B cell (primary cell): ENCODE measurements at regions of chr20 and their contacts with region 1.

Region 1: GRCh38 chr20:19784511-19785172 is 26.6 kb downstream of the RIN2 start:
- DNase-seq: peak; percentile 75
- ATAC-seq: peak; percentile 78
- H3K4me3 ChIP-seq: no peak overlapping the region
- H3K4me3 Mint-ChIP-seq: peak overlapping the region; percentile 13
- H3K27ac ChIP-seq: no peak overlapping the region
- H3K27ac Mint-ChIP-seq: no peak overlapping the region
- H3K4me1 ChIP-seq: peaks cover 7 to 11% of the 10 kb centered on the region in 2 donors
- H3K4me1 Mint-ChIP-seq: peaks cover 20% of the 10 kb centered on the region
- H3K27me3 ChIP-seq: no peaks in the 10 kb centered on the region
- H3K27me3 Mint-ChIP-seq: peaks cover 8% of the 10 kb centered on the region
- CTCF ChIP-seq: peak; percentile 70

Region 2: DNA sequence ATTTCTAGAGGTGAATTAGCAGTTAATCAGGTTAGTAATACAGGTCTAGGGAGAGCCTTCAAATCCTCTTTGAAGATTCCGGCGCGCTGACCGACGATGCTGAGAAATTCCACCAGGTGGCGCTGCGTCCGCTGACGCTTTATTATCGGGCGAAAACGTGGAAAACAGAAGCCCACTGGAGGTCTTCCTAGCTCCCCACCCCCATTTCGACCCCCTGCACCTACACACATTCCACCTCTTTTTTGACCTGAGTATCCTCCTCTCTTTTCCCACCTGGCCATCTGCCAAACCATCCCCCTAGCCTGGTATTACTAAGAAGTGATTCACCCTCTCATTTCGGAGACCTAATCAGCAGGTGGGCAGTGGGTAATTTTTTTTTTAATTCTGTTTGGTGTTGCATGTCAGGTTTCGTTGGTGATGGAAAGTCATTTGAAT is 91.9 kb before region 1 on chr20:
- CTCF ChIA-PET with region 1: interaction called, 13 read pairs
- POLR2A ChIA-PET with region 1: no interaction called
- intact Hi-C with region 1: loop called (anchors 1 kb)
- DNase-seq: peak; percentile 73
- ATAC-seq: peak; percentile 51
- H3K4me3 ChIP-seq: peak overlapping the region in 1 of 5 experiments; percentile 16
- H3K4me3 Mint-ChIP-seq: peak overlapping the region; percentile 60
- H3K27ac ChIP-seq: no peak overlapping the region
- H3K27ac Mint-ChIP-seq: no peak overlapping the region
- H3K4me1 ChIP-seq: peaks cover 5 to 9% of the 10 kb centered on the region in 2 donors
- H3K4me1 Mint-ChIP-seq: peaks cover 6% of the 10 kb centered on the region
- H3K27me3 ChIP-seq: peaks cover 0 to 2% (median 0%) of the 10 kb centered on the region in 4 experiments
- H3K27me3 Mint-ChIP-seq: peaks cover 4% of the 10 kb centered on the region
- CTCF ChIP-seq: peak; percentile 98

Region 3: GRCh38 chr20:19735446-19735845 is 49.2 kb before region 1 on chr20:
- CTCF ChIA-PET with region 1: no interaction called
- POLR2A ChIA-PET with region 1: no interaction called
- intact Hi-C with region 1: no loop called
- DNase-seq: no peak
- ATAC-seq: peak; percentile 78
- H3K4me3 ChIP-seq: no peak overlapping the region
- H3K4me3 Mint-ChIP-seq: no peak overlapping the region
- H3K27ac ChIP-seq: no peak overlapping the region
- H3K27ac Mint-ChIP-seq: no peak overlapping the region
- H3K4me1 ChIP-seq: peaks cover 4 to 5% of the 10 kb centered on the region in 2 donors
- H3K4me1 Mint-ChIP-seq: peaks cover 10% of the 10 kb centered on the region
- H3K27me3 ChIP-seq: no peaks in the 10 kb centered on the region
- H3K27me3 Mint-ChIP-seq: peaks cover 7% of the 10 kb centered on the region
- CTCF ChIP-seq: no peak

Region 4: DNA sequence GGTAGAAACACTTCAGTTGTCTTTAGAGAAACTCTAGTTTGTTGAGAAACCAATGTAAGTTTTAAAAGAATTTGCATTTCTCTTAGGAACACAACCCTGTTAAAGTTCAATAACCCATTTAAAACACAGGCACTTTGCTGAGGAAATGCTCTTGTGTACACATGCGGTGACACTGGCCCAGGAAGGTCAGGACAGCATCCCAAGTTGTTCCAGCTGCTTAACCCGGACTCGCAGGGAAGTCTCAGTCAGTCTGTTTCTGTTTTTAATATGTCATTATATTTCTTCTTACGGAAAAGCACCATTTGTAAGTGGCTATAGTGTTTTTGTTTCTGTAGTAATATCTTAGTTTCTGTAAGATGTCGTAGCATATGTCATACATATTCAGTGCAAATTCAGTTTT is 10.3 kb after region 1 on chr20:
- CTCF ChIA-PET with region 1: interaction called, 10 read pairs
- POLR2A ChIA-PET with region 1: no interaction called
- intact Hi-C with region 1: no loop called
- DNase-seq: no peak
- ATAC-seq: no peak
- H3K4me3 ChIP-seq: no peak overlapping the region
- H3K4me3 Mint-ChIP-seq: no peak overlapping the region
- H3K27ac ChIP-seq: no peak overlapping the region
- H3K27ac Mint-ChIP-seq: no peak overlapping the region
- H3K4me1 ChIP-seq: no peaks in the 10 kb centered on the region
- H3K4me1 Mint-ChIP-seq: no peaks in the 10 kb centered on the region
- H3K27me3 ChIP-seq: no peaks in the 10 kb centered on the region
- H3K27me3 Mint-ChIP-seq: peaks cover 7% of the 10 kb centered on the region
- CTCF ChIP-seq: no peak

Region 5: DNA sequence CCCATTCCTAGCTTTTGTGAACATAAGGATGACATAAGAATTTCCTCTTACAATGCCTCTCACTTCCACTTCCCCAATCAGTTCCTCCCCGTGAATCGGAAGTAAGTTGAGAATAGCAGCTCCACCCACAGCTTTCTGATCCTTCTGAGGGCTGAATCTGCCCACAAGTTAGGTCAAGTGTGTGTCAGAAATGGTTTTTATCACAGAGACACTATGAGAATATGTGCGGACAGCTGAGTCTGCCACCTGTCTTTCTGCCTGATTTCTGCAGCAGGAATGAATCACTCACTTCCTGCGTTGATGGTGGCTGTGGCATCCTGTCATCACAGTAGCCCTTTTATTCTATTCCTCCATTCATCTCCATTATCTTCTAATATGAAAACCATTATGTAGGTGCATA is 43.6 kb after region 1 on chr20:
- CTCF ChIA-PET with region 1: interaction called, 34 read pairs
- POLR2A ChIA-PET with region 1: no interaction called
- intact Hi-C with region 1: loop called (anchors 1 kb)
- DNase-seq: peak; percentile 84
- ATAC-seq: peak; percentile 91
- H3K4me3 ChIP-seq: no peak overlapping the region
- H3K4me3 Mint-ChIP-seq: peak overlapping the region; percentile 12
- H3K27ac ChIP-seq: peak overlapping the region; percentile 44 to 48
- H3K27ac Mint-ChIP-seq: peak overlapping the region; percentile 66
- H3K4me1 ChIP-seq: peaks cover 58 to 63% of the 10 kb centered on the region in 2 donors
- H3K4me1 Mint-ChIP-seq: peaks cover 62% of the 10 kb centered on the region
- H3K27me3 ChIP-seq: no peaks in the 10 kb centered on the region
- H3K27me3 Mint-ChIP-seq: peaks cover under 1% of the 10 kb centered on the region
- CTCF ChIP-seq: peak; percentile 50

Region 6: DNA sequence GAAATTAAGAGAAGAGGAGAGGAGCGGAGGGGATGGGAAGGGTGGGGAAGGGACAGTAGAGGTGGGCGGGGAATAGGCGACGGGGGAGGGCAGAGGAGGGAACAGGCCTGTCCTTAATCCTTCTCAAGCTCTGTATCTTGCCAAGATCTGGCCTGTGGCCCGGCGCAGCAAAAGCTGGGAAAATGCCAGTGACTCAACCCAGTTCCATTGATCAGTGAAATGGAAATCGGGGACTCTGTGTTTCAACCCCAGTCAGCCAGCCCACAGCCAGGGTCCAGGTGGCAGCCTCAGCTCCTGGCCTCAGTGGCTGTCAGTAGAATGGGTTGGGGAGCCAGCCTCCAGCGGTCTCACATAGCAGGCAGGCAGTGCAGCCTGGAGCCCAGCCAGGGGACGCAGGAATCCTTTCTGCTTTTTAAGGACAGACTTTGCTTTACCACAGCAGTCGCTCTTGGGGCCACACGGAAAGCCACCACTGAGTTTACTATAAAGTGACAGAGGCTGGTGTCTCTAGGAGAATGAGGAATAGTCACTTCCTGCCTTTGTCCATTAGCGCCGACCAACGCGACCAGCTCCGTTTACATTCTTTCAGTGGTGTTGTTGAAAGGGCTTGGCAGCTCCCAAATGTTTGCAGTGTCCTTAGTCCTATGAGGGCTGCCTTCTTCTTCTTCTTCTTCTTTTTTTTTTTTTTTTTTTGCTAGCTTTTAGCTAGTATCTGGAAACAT is 101.5 kb after region 1 on chr20:
- CTCF ChIA-PET with region 1: interaction called, 13 read pairs
- POLR2A ChIA-PET with region 1: interaction called, 5 read pairs
- intact Hi-C with region 1: no loop called
- DNase-seq: no peak
- ATAC-seq: no peak
- H3K4me3 ChIP-seq: no peak overlapping the region
- H3K4me3 Mint-ChIP-seq: no peak overlapping the region
- H3K27ac ChIP-seq: no peak overlapping the region
- H3K27ac Mint-ChIP-seq: no peak overlapping the region
- H3K4me1 ChIP-seq: peaks cover 2 to 5% of the 10 kb centered on the region in 2 donors
- H3K4me1 Mint-ChIP-seq: no peaks in the 10 kb centered on the region
- H3K27me3 ChIP-seq: peaks cover 0 to 24% (median 15%) of the 10 kb centered on the region in 4 experiments
- H3K27me3 Mint-ChIP-seq: peaks cover 32% of the 10 kb centered on the region
- CTCF ChIP-seq: no peak

Region 7: DNA sequence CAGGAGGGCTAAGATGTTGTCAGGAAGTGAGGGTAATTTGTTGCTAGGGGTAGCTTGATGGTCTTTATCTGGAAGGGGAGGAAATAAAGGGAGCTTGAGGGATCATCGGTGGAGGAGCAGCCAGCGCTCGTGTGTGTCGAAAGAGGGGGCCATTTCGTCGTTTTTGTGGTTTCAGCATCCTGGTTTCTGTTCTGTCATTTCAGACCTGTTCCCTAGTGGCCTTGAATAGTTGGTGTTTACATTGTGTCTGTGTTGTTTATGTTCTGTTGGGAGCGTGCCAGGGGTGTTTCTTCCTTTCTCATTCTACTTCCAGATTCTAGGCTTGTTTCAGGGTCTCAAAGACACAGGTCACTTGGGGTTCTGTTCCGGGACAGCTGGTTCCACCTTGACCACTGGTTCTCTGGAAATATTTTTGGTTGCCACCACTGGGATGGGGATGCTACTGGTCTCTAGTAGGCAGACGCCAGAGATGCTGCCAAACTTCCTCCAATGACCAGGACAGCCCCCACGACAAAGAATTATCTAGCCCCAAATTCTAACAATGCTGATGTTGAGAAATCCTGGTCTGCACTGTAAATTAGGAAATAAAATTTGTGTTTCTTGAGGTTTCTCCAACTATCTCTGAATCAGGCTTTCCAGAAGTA is 118.6 kb after region 1 on chr20:
- CTCF ChIA-PET with region 1: interaction called, 9 read pairs
- POLR2A ChIA-PET with region 1: no interaction called
- intact Hi-C with region 1: loop called (anchors 1 kb)
- DNase-seq: peak; percentile 80
- ATAC-seq: peak; percentile 90
- H3K4me3 ChIP-seq: no peak overlapping the region
- H3K4me3 Mint-ChIP-seq: no peak overlapping the region
- H3K27ac ChIP-seq: no peak overlapping the region
- H3K27ac Mint-ChIP-seq: peak overlapping the region; percentile 17
- H3K4me1 ChIP-seq: peaks cover 7 to 10% of the 10 kb centered on the region in 2 donors
- H3K4me1 Mint-ChIP-seq: peaks cover 11% of the 10 kb centered on the region
- H3K27me3 ChIP-seq: no peaks in the 10 kb centered on the region
- H3K27me3 Mint-ChIP-seq: peaks cover 8% of the 10 kb centered on the region
- CTCF ChIP-seq: peak; percentile 48

Region 8: DNA sequence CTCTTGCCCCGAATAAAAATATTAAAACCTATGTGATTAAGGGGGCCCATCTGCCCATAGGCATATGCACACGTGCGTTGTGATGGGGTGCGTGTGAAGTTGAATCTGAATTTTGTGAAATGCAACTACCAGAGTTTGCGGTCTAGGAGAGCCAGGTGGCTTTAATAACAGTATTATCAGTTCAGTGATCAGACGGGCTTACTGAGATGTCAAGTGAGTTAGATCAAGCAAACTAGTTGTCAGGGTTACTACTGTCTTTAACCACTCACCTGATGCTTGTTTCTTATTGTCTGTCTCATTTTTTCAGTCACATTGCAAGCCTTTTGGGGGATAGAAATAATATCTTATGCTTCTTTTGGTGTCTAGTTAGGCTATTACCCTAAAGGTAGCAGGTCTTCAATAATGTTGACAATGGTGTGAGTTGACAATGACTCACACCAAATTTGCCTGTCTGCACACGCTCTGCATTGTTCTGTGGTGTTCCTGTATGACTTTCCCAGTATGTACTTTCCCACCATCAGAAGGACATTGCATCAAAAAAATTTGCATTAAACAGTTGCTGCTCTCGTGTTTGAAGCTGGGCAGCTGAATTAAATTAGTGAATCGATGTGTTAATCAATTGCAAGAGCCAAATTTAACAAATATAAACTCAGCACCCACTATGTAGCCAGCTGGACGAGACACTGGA is 129.4 kb after region 1 on chr20:
- CTCF ChIA-PET with region 1: no interaction called
- POLR2A ChIA-PET with region 1: no interaction called
- intact Hi-C with region 1: no loop called
- DNase-seq: no peak
- ATAC-seq: no peak
- H3K4me3 ChIP-seq: no peak overlapping the region
- H3K4me3 Mint-ChIP-seq: peak overlapping the region; percentile 20
- H3K27ac ChIP-seq: no peak overlapping the region
- H3K27ac Mint-ChIP-seq: no peak overlapping the region
- H3K4me1 ChIP-seq: peaks cover 33 to 47% of the 10 kb centered on the region in 2 donors
- H3K4me1 Mint-ChIP-seq: peaks cover 52% of the 10 kb centered on the region
- H3K27me3 ChIP-seq: no peaks in the 10 kb centered on the region
- H3K27me3 Mint-ChIP-seq: no peaks in the 10 kb centered on the region
- CTCF ChIP-seq: no peak

Region 9: GRCh38 chr20:19995220-19995863 is 210.7 kb after region 1 on chr20:
- CTCF ChIA-PET with region 1: interaction called, 60 read pairs
- POLR2A ChIA-PET with region 1: no interaction called
- intact Hi-C with region 1: no loop called
- DNase-seq: peak; percentile 74
- ATAC-seq: peak; percentile 45
- H3K4me3 ChIP-seq: no peak overlapping the region
- H3K4me3 Mint-ChIP-seq: no peak overlapping the region
- H3K27ac ChIP-seq: no peak overlapping the region
- H3K27ac Mint-ChIP-seq: no peak overlapping the region
- H3K4me1 ChIP-seq: no peaks in the 10 kb centered on the region
- H3K4me1 Mint-ChIP-seq: no peaks in the 10 kb centered on the region
- H3K27me3 ChIP-seq: no peaks in the 10 kb centered on the region
- H3K27me3 Mint-ChIP-seq: peaks cover 10% of the 10 kb centered on the region
- CTCF ChIP-seq: peak; percentile 94

Region 10: DNA sequence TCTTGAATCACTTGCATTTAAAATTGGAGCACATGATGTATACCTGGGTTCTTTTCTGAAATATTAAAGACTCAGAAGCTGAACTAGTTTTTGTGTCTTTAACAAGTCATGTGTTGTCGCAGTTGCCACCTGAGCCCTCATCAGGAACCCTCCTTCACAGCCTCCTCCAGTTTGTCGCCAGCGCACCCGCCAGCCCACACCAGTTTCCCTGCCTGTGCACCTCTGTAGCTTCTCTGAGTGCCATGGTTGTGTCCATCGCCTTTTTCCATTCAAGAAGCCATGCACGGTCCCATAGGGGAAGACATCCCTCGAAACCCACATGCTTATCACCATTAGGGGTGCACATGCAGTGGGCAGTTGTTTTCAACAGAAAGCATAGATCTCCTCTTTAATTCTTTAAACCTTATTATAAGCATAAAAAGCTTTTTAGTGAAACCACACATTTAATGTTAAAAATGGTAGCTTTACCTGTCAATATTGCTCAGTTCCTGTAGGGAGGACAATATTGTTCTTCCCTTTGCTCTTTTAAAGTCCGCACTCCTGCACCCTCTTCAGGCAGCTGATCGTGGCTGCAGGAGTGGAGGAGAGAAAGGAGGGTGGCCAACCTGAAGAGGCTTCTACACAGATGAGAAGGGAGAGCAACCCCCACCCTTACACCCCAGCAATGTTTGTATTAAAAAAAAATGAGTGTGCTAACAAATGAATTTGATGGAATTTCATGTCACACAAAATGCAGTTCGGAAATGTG is 389.6 kb after region 1 on chr20:
- CTCF ChIA-PET with region 1: no interaction called
- POLR2A ChIA-PET with region 1: no interaction called
- intact Hi-C with region 1: no loop called
- DNase-seq: no peak
- ATAC-seq: no peak
- H3K4me3 ChIP-seq: no peak overlapping the region
- H3K4me3 Mint-ChIP-seq: no peak overlapping the region
- H3K27ac ChIP-seq: no peak overlapping the region
- H3K27ac Mint-ChIP-seq: no peak overlapping the region
- H3K4me1 ChIP-seq: no peaks in the 10 kb centered on the region
- H3K4me1 Mint-ChIP-seq: no peaks in the 10 kb centered on the region
- H3K27me3 ChIP-seq: no peaks in the 10 kb centered on the region
- H3K27me3 Mint-ChIP-seq: peaks cover 27% of the 10 kb centered on the region
- CTCF ChIP-seq: no peak